Naive thymus-derived CD4-positive, alpha-beta T cell (primary cell): ENCODE measurements at regions of chr21 and their contacts with region 1.

Region 1: GRCh38 chr21:33199516-33200217 is 30.1 kb upstream of the IFNAR2 start:
- DNase-seq: peak; percentile 31 to 88 (median 81)
- ATAC-seq: peak; percentile 91
- H3K4me3 ChIP-seq: no peak overlapping the region
- H3K4me3 Mint-ChIP-seq: no peak overlapping the region
- H3K27ac ChIP-seq: no peak overlapping the region
- H3K27ac Mint-ChIP-seq: peak overlapping the region in 7 of 9 donors; percentile 22 to 87 (median 52)
- H3K4me1 ChIP-seq: peaks cover under 1 to 9% of the 10 kb centered on the region in 2 donors
- H3K4me1 Mint-ChIP-seq: peaks cover 24 to 53% (median 42%) of the 10 kb centered on the region in 7 donors
- H3K27me3 ChIP-seq: no peaks in the 10 kb centered on the region
- H3K27me3 Mint-ChIP-seq: peaks cover 0 to 31% (median 0%) of the 10 kb centered on the region in 5 donors

Region 2: DNA sequence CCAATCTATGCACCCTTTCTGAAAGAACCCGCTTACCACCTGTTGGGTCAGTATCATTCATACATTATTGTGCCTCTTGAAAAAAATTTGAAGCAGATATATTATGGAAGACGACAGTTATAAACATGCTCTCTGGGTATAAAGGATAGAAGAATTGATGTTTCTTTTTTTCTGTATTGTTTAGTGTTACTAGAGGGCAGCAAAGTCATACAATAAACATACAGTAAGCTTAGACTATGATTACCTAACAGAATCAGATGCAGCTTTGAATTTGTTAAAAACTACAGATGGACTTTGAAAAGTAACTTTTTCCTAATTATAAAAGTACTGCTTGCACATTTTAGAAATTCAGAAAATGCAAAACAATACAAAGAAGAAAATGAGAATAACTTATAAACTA is 417.0 kb before region 1 on chr21:
- CTCF ChIA-PET with region 1: no interaction called
- POLR2A ChIA-PET with region 1: no interaction called
- intact Hi-C with region 1: no loop called
- DNase-seq: no peak
- ATAC-seq: no peak
- H3K4me3 ChIP-seq: no peak overlapping the region
- H3K4me3 Mint-ChIP-seq: no peak overlapping the region
- H3K27ac ChIP-seq: no peak overlapping the region
- H3K27ac Mint-ChIP-seq: no peak overlapping the region
- H3K4me1 ChIP-seq: no peaks in the 10 kb centered on the region
- H3K4me1 Mint-ChIP-seq: peaks cover 0 to 12% (median 6%) of the 10 kb centered on the region in 7 donors
- H3K27me3 ChIP-seq: no peaks in the 10 kb centered on the region
- H3K27me3 Mint-ChIP-seq: peaks cover 0 to 2% (median 0%) of the 10 kb centered on the region in 5 donors

Region 3: GRCh38 chr21:32834916-32835235 is 364.8 kb before region 1 on chr21:
- CTCF ChIA-PET with region 1: interaction called, 30 read pairs
- POLR2A ChIA-PET with region 1: no interaction called
- intact Hi-C with region 1: loop called (anchors 1 to 2 kb)
- DNase-seq: no peak
- ATAC-seq: no peak
- H3K4me3 ChIP-seq: no peak overlapping the region
- H3K4me3 Mint-ChIP-seq: no peak overlapping the region
- H3K27ac ChIP-seq: no peak overlapping the region
- H3K27ac Mint-ChIP-seq: no peak overlapping the region
- H3K4me1 ChIP-seq: no peaks in the 10 kb centered on the region
- H3K4me1 Mint-ChIP-seq: peaks cover 0 to 2% (median 0%) of the 10 kb centered on the region in 7 donors
- H3K27me3 ChIP-seq: peaks cover 0 to 5% of the 10 kb centered on the region in 2 donors
- H3K27me3 Mint-ChIP-seq: peaks cover 0 to 30% (median 0%) of the 10 kb centered on the region in 5 donors

Region 4: GRCh38 chr21:32994305-32994704 is 205.4 kb before region 1 on chr21:
- CTCF ChIA-PET with region 1: interaction called, 38 read pairs
- POLR2A ChIA-PET with region 1: no interaction called
- intact Hi-C with region 1: loop called (anchors 1 to 2 kb)
- DNase-seq: peak in 1 of 9 donors; percentile 10
- ATAC-seq: no peak
- H3K4me3 ChIP-seq: no peak overlapping the region
- H3K4me3 Mint-ChIP-seq: no peak overlapping the region
- H3K27ac ChIP-seq: no peak overlapping the region
- H3K27ac Mint-ChIP-seq: no peak overlapping the region
- H3K4me1 ChIP-seq: no peaks in the 10 kb centered on the region
- H3K4me1 Mint-ChIP-seq: peaks cover 0 to 2% (median 0%) of the 10 kb centered on the region in 7 donors
- H3K27me3 ChIP-seq: no peaks in the 10 kb centered on the region
- H3K27me3 Mint-ChIP-seq: peaks cover 5 to 57% (median 20%) of the 10 kb centered on the region in 5 donors

Region 5: DNA sequence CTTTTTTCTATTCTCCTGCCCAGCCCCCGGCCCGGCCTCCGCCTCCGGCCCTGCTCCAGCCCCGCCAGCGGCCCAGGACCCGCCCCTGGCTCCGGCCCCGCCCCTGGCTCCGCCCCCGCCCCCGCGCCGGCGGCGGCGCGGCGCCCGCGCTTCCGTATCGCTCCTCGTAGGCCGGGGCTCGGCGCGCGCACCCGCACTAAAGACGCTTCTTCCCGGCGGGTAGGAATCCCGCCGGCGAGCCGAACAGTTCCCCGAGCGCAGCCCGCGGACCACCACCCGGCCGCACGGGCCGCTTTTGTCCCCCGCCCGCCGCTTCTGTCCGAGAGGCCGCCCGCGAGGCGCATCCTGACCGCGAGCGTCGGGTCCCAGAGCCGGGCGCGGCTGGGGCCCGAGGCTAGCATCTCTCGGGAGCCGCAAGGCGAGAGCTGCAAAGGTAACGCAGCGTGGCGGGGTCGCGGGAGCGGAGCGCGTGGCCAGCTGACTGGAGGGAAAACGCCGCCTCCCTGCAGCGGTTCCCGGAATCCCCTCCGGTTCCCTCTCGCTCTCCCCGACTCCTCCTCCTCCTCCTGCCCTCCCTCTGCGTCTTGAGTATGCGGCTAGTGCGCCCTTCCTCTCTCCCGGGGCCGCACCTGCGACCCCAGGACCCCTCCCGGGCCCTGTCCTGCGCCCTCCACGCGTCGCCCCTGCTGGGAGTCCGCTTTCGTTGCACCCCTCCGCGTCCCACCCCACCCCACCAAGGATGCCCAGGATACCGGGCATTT is 30.3 kb after region 1 on chr21 and contains the start of gene IFNAR2:
- CTCF ChIA-PET with region 1: interaction called, 3 read pairs
- POLR2A ChIA-PET with region 1: interaction called, 4 read pairs
- intact Hi-C with region 1: loop called (anchors 1 kb)
- DNase-seq: peak; percentile 55 to 82 (median 68)
- ATAC-seq: peak; percentile 93
- H3K4me3 ChIP-seq: peak within 1 kb of the TSS; percentile 83
- H3K4me3 Mint-ChIP-seq: peak within 1 kb of the TSS; percentile 88 to 97 (median 92)
- H3K27ac ChIP-seq: peak within 1 kb of the TSS; percentile 92
- H3K27ac Mint-ChIP-seq: peak within 1 kb of the TSS; percentile 83 to 98 (median 90)
- H3K4me1 ChIP-seq: peaks cover 22 to 40% of the 10 kb centered on the region in 2 donors
- H3K4me1 Mint-ChIP-seq: peaks cover 35 to 59% (median 51%) of the 10 kb centered on the region in 7 donors
- H3K27me3 ChIP-seq: no peaks in the 10 kb centered on the region
- H3K27me3 Mint-ChIP-seq: no peaks in the 10 kb centered on the region
- total RNA-seq, gene IFNAR2: 44.9 to 85.8 (median 60.8) TPM

Region 6: GRCh38 chr21:33308586-33309490 is 109.2 kb after region 1 on chr21:
- CTCF ChIA-PET with region 1: interaction called, 5 read pairs
- POLR2A ChIA-PET with region 1: no interaction called
- intact Hi-C with region 1: loop called in 1 of 2 experiments (anchors 1 kb)
- DNase-seq: peak in 7 of 9 donors; percentile 26 to 60 (median 40)
- ATAC-seq: peak; percentile 38
- H3K4me3 ChIP-seq: no peak overlapping the region
- H3K4me3 Mint-ChIP-seq: peak overlapping the region in 3 of 10 donors; percentile 5 to 12 (median 5)
- H3K27ac ChIP-seq: peak overlapping the region; percentile 3
- H3K27ac Mint-ChIP-seq: peak overlapping the region in 7 of 9 donors; percentile 1 to 80 (median 23)
- H3K4me1 ChIP-seq: peaks cover 0 to 12% of the 10 kb centered on the region in 2 donors
- H3K4me1 Mint-ChIP-seq: peaks cover 9 to 43% (median 31%) of the 10 kb centered on the region in 7 donors
- H3K27me3 ChIP-seq: no peaks in the 10 kb centered on the region
- H3K27me3 Mint-ChIP-seq: peaks cover 0 to 10% (median 0%) of the 10 kb centered on the region in 5 donors

Region 7: DNA sequence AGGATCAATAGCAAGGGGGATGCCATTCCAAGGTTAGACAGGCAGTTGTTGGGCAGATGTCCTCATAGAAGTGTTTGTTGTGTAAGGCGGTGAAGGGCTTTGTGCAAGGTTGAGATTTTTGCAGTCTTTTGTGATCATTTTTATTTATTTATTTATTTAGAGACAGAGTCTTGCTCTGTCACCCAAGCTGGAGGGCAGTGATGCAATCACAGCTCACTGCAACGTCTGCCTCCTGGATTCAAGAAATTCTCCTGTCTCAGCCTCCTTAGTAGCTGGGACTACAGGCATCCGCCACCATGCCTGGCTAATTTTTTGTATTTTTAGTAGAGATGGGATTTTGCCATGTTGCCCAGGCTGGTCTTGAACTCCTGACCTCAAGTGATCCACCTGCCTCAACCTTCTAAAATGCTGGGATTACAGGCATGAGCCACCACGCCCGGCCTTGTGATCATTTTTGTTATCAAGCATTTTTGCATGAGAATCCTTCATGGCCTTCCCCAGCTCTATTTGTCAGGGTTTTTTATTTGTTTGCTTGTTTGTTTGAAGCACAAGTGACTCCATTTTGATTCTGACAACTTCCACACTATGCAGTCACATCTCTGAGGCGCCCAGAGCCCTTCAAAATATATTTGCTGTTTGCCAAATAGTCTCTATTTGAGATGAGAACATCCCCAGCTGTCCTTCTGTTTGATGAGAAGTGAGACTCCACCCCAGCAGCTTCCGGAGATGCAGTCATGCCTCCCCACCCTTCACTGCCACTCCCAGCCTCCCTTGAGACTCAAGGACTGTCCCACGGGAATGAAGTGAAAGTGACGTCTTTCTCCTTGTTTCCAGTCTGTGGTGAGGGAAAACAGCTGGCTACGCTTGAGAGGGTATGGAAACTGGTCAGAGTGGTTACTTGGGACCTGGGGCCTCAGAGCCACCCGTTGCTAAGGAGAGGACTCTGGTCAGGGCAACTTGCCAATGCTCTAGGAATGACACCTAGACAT is 242.1 kb after region 1 on chr21:
- CTCF ChIA-PET with region 1: interaction called, 41 read pairs
- POLR2A ChIA-PET with region 1: interaction called, 4 read pairs
- intact Hi-C with region 1: loop called (anchors 1 kb)
- DNase-seq: no peak
- ATAC-seq: no peak
- H3K4me3 ChIP-seq: no peak overlapping the region
- H3K4me3 Mint-ChIP-seq: no peak overlapping the region
- H3K27ac ChIP-seq: no peak overlapping the region
- H3K27ac Mint-ChIP-seq: peak overlapping the region in 6 of 9 donors; percentile 9 to 78 (median 55)
- H3K4me1 ChIP-seq: no peaks in the 10 kb centered on the region
- H3K4me1 Mint-ChIP-seq: peaks cover 4 to 10% (median 6%) of the 10 kb centered on the region in 7 donors
- H3K27me3 ChIP-seq: no peaks in the 10 kb centered on the region
- H3K27me3 Mint-ChIP-seq: no peaks in the 10 kb centered on the region